Tibial artery (tissue), 4 donors: ENCODE measurements at regions of chr11 and their contacts with region 1.

Region 1: DNA sequence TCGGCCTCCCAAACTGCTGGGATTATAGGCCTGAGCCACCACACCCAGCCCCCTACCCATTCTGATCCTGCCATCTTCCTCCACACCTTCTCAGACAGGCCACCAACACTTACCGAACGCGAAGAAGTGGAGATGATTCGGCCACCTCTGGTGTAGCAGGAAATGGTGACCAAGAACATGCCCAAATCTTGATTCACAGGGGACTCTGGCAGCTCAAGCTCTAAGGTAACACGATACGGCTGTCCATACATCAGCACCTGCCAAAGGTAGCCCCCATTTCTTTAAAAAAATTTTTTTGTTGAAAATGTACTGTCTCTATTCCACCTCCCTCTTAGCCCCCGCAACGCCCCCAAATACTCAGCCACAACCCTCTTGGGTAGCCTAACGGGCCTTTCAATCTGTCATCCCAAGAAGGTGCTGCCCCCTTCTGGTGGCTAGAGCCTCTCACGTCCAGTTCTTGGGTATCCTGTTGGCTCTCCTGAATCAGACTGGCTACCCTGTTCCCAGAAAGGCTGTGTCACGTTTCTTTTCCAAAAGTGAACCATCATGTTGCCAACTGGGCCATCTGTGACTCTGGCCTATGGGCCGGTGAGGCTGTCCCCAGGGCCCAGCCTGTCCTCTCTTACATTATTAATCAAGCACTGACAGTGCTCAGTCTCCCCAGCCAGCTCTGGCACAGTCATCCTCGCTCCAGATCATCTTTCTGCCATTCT is 5.3 kb upstream of the LRRN4CL start:
- DNase-seq: peak; percentile 86 to 88
- H3K4me3 ChIP-seq: no peak overlapping the region
- H3K27ac ChIP-seq: no peak overlapping the region
- H3K4me1 ChIP-seq: peaks cover 0 to 7% (median 0%) of the 10 kb centered on the region in 4 donors
- H3K27me3 ChIP-seq: no peaks in the 10 kb centered on the region
- CTCF ChIP-seq: peak; percentile 76 to 87

Region 2: DNA sequence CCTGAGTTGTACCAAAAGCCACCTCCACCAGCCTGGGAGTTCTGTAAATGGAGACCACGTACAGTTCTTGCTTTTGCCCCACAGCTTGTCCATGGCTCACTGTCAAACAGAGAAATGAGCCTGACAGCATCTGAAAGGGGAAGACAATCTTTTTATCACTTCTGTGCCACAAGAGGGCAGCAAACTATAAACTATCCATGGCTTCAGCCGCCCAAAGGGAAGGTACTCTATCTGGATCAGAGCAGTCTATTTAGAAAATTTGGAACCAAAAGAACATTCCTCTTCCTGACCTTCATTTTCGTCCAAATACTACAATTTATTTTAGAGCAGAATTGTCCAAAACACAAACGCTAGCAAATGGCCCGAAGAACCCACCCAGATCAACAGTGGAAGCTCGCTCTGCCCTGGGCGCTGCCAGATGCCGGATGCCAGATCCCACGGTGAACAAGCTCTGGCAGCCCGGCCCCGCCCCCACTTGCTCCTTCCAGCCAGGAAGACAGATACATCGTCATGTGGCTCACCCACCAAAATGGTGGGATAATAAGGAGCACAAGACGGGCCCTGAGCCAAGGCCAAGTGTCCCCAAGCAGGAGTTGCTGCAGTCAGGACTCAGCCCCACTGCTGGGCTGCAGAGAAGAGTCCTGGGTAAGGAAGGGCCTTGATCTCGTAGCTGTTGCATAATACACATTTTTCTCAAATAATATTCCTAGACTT is 299.6 kb before region 1 on chr11:
- intact Hi-C with region 1: loop called (anchors 10 kb)
- DNase-seq: peak; percentile 75 to 92
- H3K4me3 ChIP-seq: peak overlapping the region; percentile 36 to 44
- H3K27ac ChIP-seq: peak overlapping the region; percentile 63 to 77
- H3K4me1 ChIP-seq: peaks cover 8 to 39% (median 33%) of the 10 kb centered on the region in 4 donors
- H3K27me3 ChIP-seq: no peaks in the 10 kb centered on the region
- CTCF ChIP-seq: peak; percentile 62 to 76